ENCODE measurements at regions of chr3 and their contacts with region 1.

Region 1: GRCh38 chr3:53804821-53805788 is 41.1 kb downstream of the CHDH start:
- DNase-seq: peak in 3 of 10 donors; percentile 48 to 78 (median 63)
- H3K4me3 ChIP-seq: no peak overlapping the region
- H3K27ac ChIP-seq: peak overlapping the region in 46 of 59 donors; percentile 2 to 86 (median 64)
- H3K27me3 ChIP-seq: no peaks in the 10 kb centered on the region
- CTCF ChIP-seq: no peak

Region 2: DNA sequence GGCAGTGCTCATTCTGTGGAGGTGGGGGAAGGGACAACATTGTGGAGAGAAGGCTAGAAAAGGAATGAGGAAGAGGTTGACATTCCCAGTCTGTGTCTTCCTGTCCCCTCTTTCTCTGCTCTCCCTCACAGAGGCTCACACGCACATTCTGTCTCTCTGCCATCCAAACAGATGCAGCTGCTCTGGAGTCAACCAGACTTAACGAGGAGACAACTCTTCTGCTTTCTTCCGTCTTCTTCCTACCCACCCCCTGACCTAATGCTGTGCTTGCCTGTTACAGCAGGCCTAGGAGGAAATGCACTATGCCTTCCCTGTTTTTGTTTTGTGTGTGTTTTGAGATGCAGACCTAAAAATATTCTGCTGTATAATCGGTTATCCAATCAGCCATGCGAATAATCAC is 188.8 kb before region 1 on chr3:
- intact Hi-C with region 1: no loop called
- DNase-seq: peak in 1 of 10 donors; percentile 17
- H3K4me3 ChIP-seq: no peak overlapping the region
- H3K27ac ChIP-seq: peak overlapping the region in 42 of 59 donors; percentile 5 to 71 (median 42)
- H3K27me3 ChIP-seq: no peaks in the 10 kb centered on the region
- CTCF ChIP-seq: no peak

Region 3: DNA sequence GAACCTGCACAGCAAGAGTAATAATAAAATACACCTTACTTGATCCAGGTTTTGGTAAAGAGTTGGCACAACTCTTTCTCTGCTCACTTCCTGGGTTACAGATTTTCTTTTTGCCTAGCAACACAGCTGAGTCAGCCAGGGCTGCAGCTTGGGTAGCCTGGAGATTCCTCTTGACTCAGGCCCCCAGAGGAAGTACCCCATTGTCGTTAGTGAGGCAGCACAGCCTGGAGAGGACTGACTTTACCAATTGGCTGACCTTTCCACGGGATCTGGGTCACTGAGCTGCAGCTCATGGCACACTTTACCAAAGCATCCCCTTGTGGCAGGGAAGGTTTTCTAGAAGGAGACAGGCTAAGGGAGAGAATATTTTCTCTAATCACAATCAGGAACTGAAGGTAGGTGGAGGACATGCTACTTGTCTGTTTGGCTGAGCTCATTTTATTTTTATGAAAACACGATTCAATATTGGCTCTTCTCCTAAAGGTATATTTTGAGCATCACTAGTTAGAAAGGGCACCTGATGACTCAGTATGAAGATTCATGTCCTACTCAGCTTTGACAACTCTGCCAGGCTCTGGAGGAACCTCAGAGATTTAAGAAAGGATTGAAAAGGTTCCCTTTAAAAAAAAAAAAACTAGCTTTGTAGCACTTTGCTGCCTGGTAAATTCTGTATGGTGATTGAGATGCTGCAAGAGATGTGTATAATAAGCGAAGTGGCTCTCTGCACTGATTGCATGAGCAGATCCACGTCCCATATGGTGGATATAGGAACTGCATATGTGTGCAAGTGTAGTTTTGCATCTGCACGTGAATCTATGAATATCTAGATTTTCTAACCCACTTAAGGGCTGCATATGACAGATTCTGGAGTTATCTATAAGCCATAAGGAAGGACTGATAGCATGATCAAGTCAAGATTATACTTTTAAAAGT is 83.7 kb before region 1 on chr3:
- intact Hi-C with region 1: loop called in 1 of 2 experiments (anchors 2 kb)
- DNase-seq: peak in 1 of 10 donors; percentile 19
- H3K4me3 ChIP-seq: no peak overlapping the region
- H3K27ac ChIP-seq: peak overlapping the region in 27 of 59 donors; percentile 9 to 67 (median 45)
- H3K27me3 ChIP-seq: no peaks in the 10 kb centered on the region
- CTCF ChIP-seq: peak in 3 of 56 donors; percentile 10 to 30 (median 11)

Region 4: GRCh38 chr3:53921296-53921695 is 116.2 kb after region 1 on chr3:
- intact Hi-C with region 1: no loop called
- DNase-seq: no peak
- H3K4me3 ChIP-seq: no peak overlapping the region
- H3K27ac ChIP-seq: no peak overlapping the region
- H3K27me3 ChIP-seq: peaks cover 0 to 8% (median 0%) of the 10 kb centered on the region in 45 donors
- CTCF ChIP-seq: peak in 17 of 56 donors; percentile 9 to 48 (median 22)

Measured in dorsolateral prefrontal cortex (tissue), 120 donors.